Activated T-helper 1 cell treated with anti-CD3 and anti-CD28 coated beads, Interleukin-12 subunit alpha, Interleukin-12 subunit beta, Interleukin-2, Interleukin-4 antibody, amounts not matched to agents 30 ng/mL and 10 ng/mL and 1 ng/mL, durations not matched to agents 14 hours and 24 hours and 36 hours (primary cell): ENCODE measurements at regions of chr14 and their contacts with region 1.

Region 1: GRCh38 chr14:52351233-52352060 is 37.3 kb downstream of the PTGER2 start:
- DNase-seq: peak; percentile 8
- H3K4me3 Mint-ChIP-seq: peak overlapping the region; percentile 75
- H3K27ac Mint-ChIP-seq: peak overlapping the region; percentile 96
- H3K4me1 Mint-ChIP-seq: peaks cover 73% of the 10 kb centered on the region
- H3K27me3 Mint-ChIP-seq: no peaks in the 10 kb centered on the region

Region 2: DNA sequence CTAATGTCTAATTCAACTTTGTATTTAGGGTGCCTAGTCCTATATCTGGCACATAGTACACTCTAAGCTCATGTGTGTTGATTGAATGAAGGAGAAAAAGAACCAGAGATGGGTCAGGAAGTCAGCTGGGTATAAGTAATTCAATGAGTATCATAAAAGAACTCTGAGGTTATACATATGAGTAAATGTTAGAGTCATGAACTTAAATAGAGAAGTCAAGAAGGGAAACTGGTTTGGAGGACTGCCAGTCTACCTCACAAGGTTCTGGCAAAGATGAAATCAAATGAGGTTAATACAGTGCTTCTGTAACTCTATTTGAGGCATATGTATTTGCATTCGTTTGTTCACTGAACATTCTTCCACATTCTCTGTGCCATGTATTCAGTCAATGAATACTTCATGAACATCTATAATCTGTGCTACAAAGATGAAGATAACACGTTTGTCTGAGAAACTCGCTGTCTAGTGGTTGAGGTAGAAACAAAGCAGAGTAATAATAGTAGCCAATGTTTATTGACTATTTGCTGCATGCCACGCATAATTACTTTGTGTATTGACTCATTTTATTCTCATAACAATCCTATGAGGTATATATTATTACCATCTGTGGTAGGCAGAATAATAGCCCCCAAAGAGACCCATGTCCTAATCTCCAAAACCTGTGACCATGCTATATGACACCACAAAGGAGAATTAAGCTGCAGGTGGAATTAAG is 51.5 kb after region 1 on chr14:
- intact Hi-C with region 1: loop called (anchors 1 kb)
- DNase-seq: no peak
- H3K4me3 Mint-ChIP-seq: no peak overlapping the region
- H3K27ac Mint-ChIP-seq: peak overlapping the region; percentile 54
- H3K4me1 Mint-ChIP-seq: peaks cover 73% of the 10 kb centered on the region
- H3K27me3 Mint-ChIP-seq: no peaks in the 10 kb centered on the region

Region 3: GRCh38 chr14:52467515-52468266 is 116.2 kb after region 1 on chr14:
- intact Hi-C with region 1: loop called (anchors 1 kb)
- DNase-seq: no peak
- H3K4me3 Mint-ChIP-seq: no peak overlapping the region
- H3K27ac Mint-ChIP-seq: peak overlapping the region; percentile 75
- H3K4me1 Mint-ChIP-seq: peaks cover 24% of the 10 kb centered on the region
- H3K27me3 Mint-ChIP-seq: no peaks in the 10 kb centered on the region